ENCODE measurements at regions of chr7 and their contacts with region 1.

Region 1: DNA sequence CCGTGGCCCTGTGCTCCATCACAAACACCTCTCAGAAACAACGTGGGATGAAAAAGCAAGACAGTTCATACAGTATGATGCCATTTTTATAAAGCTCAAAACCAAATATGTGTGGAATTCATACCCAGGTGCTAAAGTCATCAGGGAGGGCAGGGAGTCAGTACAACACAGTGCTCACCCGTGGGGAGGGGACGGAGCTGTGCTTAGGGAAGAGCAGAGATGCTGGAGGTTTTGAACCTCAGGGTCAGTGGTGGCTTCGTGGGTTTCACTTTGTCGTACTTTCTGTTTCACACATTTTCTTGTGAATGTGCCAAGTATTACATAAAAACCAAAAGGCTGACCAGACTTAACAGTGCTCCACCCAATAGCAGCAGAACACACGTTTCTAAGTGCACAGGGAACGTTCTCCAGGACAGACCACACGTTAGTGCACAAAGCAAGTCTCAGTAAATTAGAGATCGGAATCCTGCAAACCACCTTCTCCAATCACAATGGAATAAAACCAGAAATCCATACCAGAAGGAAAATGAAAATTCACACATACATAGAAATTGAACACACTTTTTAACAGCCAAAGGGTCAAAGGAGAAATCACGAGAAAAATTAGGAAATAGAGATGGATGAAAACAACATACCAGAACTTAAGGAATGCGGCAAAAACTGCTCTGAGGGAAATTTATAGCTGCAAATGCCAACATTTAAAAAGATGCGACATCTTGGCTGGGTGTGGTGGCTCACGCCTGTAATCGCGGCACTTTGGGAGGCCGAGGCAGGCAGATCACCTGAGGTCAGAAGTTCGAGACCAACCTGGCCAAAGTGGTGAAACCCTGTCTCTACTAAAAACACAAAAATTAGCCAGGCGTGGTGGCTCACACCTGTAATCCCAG is 21.4 kb downstream of the ZMIZ2 start:
- DNase-seq: peak in 3 of 5 donors; percentile 20 to 49 (median 22)
- H3K4me3 ChIP-seq: no peak overlapping the region
- H3K4me3 Mint-ChIP-seq: peak overlapping the region in 7 of 8 donors; percentile 25 to 74 (median 61)
- H3K27ac ChIP-seq: peak overlapping the region; percentile 33
- H3K27ac Mint-ChIP-seq: peak overlapping the region; percentile 76 to 95 (median 87)
- H3K4me1 ChIP-seq: peaks cover 41% of the 10 kb centered on the region
- H3K4me1 Mint-ChIP-seq: peaks cover 17 to 50% (median 38%) of the 10 kb centered on the region in 4 donors
- H3K27me3 ChIP-seq: no peaks in the 10 kb centered on the region
- H3K27me3 Mint-ChIP-seq: no peaks in the 10 kb centered on the region

Region 2: GRCh38 chr7:44587843-44588711 is 181.9 kb before region 1 on chr7:
- CTCF ChIA-PET with region 1: interaction called, 3 read pairs
- POLR2A ChIA-PET with region 1: no interaction called
- intact Hi-C with region 1: loop called (anchors 1 kb)
- DNase-seq: peak; percentile 65 to 73 (median 71)
- H3K4me3 ChIP-seq: no peak overlapping the region
- H3K4me3 Mint-ChIP-seq: no peak overlapping the region
- H3K27ac ChIP-seq: no peak overlapping the region
- H3K27ac Mint-ChIP-seq: peak overlapping the region in 5 of 7 donors; percentile 42 to 86 (median 68)
- H3K4me1 ChIP-seq: peaks cover 2% of the 10 kb centered on the region
- H3K4me1 Mint-ChIP-seq: peaks cover 5 to 16% (median 9%) of the 10 kb centered on the region in 4 donors
- H3K27me3 ChIP-seq: no peaks in the 10 kb centered on the region
- H3K27me3 Mint-ChIP-seq: no peaks in the 10 kb centered on the region

Region 3: GRCh38 chr7:44867073-44867995 is 97.3 kb after region 1 on chr7:
- CTCF ChIA-PET with region 1: no interaction called
- POLR2A ChIA-PET with region 1: no interaction called
- intact Hi-C with region 1: no loop called
- DNase-seq: peak in 1 of 5 donors; percentile 39
- H3K4me3 ChIP-seq: no peak overlapping the region
- H3K4me3 Mint-ChIP-seq: no peak overlapping the region
- H3K27ac ChIP-seq: no peak overlapping the region
- H3K27ac Mint-ChIP-seq: no peak overlapping the region
- H3K4me1 ChIP-seq: no peaks in the 10 kb centered on the region
- H3K4me1 Mint-ChIP-seq: no peaks in the 10 kb centered on the region
- H3K27me3 ChIP-seq: no peaks in the 10 kb centered on the region
- H3K27me3 Mint-ChIP-seq: peaks cover 0 to 4% of the 10 kb centered on the region in 2 donors

Region 4: DNA sequence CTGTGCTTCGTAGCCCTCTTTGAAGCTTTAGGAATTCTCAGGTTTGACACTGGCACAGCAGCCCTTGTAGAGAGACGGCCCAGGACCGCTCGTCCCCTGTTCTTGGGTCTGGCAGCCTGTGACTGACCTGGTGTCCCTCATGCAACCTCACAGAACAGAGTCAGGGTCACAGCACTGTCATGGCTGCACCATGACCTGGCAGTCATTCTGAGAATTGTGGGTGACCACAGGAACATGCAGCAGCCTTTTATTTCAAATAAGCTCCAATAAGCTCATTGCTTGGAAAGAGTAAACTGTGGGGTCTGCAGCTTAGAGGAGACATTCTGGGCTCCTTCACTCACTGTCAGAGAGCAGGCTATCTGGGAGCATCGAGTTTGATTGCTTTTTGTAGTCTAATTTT is 166.3 kb after region 1 on chr7:
- CTCF ChIA-PET with region 1: no interaction called
- POLR2A ChIA-PET with region 1: no interaction called
- intact Hi-C with region 1: no loop called
- DNase-seq: no peak
- H3K4me3 ChIP-seq: no peak overlapping the region
- H3K4me3 Mint-ChIP-seq: no peak overlapping the region
- H3K27ac ChIP-seq: no peak overlapping the region
- H3K27ac Mint-ChIP-seq: no peak overlapping the region
- H3K4me1 ChIP-seq: no peaks in the 10 kb centered on the region
- H3K4me1 Mint-ChIP-seq: no peaks in the 10 kb centered on the region
- H3K27me3 ChIP-seq: no peaks in the 10 kb centered on the region
- H3K27me3 Mint-ChIP-seq: peaks cover 4% of the 10 kb centered on the region in 2 donors